Activated CD4-positive, alpha-beta memory T cell treated with anti-CD3 and anti-CD28 coated beads for 36 hours (primary cell): ENCODE measurements at regions of chr12 and their contacts with region 1.

Region 1: DNA sequence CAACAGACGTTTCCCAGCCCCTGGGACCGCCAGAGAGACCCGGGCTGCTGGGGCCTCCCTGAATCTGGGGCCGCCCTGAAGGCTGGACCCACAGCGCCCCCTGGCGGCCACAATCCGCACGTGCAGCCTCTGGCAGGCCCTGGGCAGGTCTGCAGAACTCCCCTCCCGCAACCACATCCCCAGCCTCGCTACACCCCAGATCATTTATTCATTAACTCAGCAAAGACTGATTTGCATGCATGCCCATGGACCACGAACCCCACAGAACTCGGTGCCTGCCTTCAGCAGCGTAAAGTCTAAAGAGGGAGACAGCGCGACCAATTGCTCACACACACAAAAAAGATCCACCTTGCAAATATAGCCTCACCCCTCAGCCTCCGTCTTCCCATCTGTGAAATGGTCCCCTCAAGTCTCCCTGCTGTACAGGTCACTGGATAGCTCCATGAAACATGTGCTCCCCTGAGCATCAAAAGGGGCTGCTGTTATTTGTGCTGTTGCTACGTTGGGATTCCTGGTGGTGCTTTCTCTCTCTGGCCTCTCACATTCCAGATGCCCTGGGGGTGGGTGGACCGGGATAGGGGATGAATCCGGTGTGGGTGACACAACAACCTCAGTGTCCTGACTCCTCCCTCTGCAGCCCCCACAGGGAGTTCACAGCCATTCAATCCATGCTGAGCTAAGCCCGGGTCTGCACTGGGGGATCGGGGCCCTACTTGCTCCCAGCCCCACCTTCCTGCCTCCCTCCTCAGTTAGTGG is 96.4 kb downstream of the SCARB1 start:
- DNase-seq: peak; percentile 88
- H3K4me3 Mint-ChIP-seq: no peak overlapping the region
- H3K27ac Mint-ChIP-seq: no peak overlapping the region
- H3K4me1 Mint-ChIP-seq: peaks cover 18% of the 10 kb centered on the region
- H3K27me3 Mint-ChIP-seq: peaks cover 15% of the 10 kb centered on the region

Region 2: GRCh38 chr12:124036674-124037109 is 730.6 kb before region 1 on chr12:
- CTCF ChIA-PET with region 1: interaction called, 44 read pairs
- POLR2A ChIA-PET with region 1: no interaction called
- intact Hi-C with region 1: loop called (anchors 1 kb)
- DNase-seq: peak; percentile 41
- H3K4me3 Mint-ChIP-seq: no peak overlapping the region
- H3K27ac Mint-ChIP-seq: no peak overlapping the region
- H3K4me1 Mint-ChIP-seq: no peaks in the 10 kb centered on the region
- H3K27me3 Mint-ChIP-seq: peaks cover 4% of the 10 kb centered on the region

Region 3: GRCh38 chr12:124321040-124321481 is 446.2 kb before region 1 on chr12:
- CTCF ChIA-PET with region 1: interaction called, 3 read pairs
- POLR2A ChIA-PET with region 1: no interaction called
- intact Hi-C with region 1: loop called (anchors 10 kb)
- DNase-seq: peak; percentile 79
- H3K4me3 Mint-ChIP-seq: no peak overlapping the region
- H3K27ac Mint-ChIP-seq: no peak overlapping the region
- H3K4me1 Mint-ChIP-seq: no peaks in the 10 kb centered on the region
- H3K27me3 Mint-ChIP-seq: no peaks in the 10 kb centered on the region

Region 4: GRCh38 chr12:124399622-124400021 is 367.6 kb before region 1 on chr12:
- CTCF ChIA-PET with region 1: interaction called, 3 read pairs
- POLR2A ChIA-PET with region 1: no interaction called
- intact Hi-C with region 1: loop called (anchors 1 kb)
- DNase-seq: peak; percentile 37
- H3K4me3 Mint-ChIP-seq: no peak overlapping the region
- H3K27ac Mint-ChIP-seq: no peak overlapping the region
- H3K4me1 Mint-ChIP-seq: peaks cover 2% of the 10 kb centered on the region
- H3K27me3 Mint-ChIP-seq: no peaks in the 10 kb centered on the region

Region 5: DNA sequence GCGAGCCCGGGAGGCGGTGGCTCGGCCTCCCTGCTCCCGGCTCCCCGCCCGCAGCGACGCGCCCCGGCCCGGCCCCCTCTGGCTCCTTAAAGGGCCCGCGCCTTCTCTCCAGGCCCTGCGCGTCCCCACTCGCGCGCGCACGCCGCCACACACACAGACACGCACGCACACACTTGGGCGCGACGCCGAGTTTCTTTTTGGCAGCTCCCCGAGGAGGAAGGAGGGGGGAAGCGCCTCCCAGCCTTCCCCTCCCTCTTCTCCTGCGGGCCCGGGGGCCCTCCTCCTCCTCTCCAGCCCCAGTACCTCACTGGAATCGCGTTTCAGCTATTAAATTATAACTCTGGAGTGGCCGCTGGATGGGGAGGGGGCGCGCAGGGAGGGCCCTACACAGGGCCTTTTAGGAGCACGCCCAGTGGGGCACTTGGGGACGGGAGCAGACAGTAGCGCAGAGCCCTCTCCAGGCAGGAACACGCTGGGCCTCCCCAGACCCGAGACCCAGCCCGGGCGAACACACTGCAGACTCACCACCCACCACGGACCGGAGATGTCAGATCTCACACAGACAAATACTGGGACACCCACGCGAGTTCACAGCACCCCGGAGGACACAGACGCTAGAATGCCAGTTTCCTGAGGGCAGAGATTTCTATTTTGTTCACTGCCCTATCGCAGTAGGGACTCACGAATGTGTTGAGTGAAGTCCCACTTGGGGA is 199.4 kb before region 1 on chr12:
- CTCF ChIA-PET with region 1: interaction called, 5 read pairs
- POLR2A ChIA-PET with region 1: no interaction called
- intact Hi-C with region 1: loop called (anchors 1 kb)
- DNase-seq: peak; percentile 83
- H3K4me3 Mint-ChIP-seq: peak overlapping the region; percentile 74
- H3K27ac Mint-ChIP-seq: peak overlapping the region; percentile 42
- H3K4me1 Mint-ChIP-seq: peaks cover 26% of the 10 kb centered on the region
- H3K27me3 Mint-ChIP-seq: no peaks in the 10 kb centered on the region

Region 6: DNA sequence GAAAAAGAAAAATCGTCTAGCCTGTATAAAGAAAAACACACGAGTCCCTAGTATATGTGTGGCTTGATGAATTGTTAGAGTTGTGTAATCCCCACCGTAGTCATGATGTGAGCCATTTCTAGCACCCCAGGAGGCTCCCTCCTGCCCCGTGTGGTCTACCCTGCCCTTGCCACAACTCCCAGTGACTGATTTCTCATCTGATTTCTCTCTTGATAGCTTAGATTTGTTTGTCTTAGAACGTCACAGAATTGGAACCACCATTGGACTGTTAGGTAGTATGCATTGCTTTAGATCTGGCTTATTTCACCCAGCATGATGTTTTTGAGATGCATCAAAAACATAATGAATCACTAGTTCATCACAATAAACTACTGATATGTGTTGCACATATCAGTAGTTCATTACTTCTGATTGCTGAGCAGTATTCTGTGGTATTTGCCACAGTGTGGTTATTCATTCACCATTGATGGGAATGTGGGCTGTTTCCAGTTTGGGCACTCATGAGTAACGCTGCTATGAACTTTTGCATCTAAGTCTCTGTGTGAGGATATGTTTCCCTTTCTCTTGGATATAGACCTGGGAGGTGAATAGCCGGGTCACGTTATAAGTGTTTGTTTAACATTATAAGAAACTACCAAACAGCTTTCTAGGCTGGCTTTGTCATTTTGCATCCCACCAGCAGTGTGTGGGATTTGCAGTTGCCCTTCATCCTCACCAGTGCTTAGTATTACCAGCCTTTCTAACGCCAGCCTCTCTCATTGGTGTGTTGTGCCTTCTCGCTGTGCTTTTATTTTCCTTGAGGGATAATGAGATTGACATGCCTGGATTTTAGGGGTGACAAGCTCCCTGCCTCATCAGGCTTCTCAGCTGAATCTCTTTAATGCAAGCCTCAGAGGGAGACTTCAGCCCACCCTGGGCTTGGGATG is 167.9 kb before region 1 on chr12:
- CTCF ChIA-PET with region 1: no interaction called
- POLR2A ChIA-PET with region 1: no interaction called
- intact Hi-C with region 1: no loop called
- DNase-seq: peak; percentile 71
- H3K4me3 Mint-ChIP-seq: no peak overlapping the region
- H3K27ac Mint-ChIP-seq: no peak overlapping the region
- H3K4me1 Mint-ChIP-seq: peaks cover 10% of the 10 kb centered on the region
- H3K27me3 Mint-ChIP-seq: peaks cover 13% of the 10 kb centered on the region

Region 7: DNA sequence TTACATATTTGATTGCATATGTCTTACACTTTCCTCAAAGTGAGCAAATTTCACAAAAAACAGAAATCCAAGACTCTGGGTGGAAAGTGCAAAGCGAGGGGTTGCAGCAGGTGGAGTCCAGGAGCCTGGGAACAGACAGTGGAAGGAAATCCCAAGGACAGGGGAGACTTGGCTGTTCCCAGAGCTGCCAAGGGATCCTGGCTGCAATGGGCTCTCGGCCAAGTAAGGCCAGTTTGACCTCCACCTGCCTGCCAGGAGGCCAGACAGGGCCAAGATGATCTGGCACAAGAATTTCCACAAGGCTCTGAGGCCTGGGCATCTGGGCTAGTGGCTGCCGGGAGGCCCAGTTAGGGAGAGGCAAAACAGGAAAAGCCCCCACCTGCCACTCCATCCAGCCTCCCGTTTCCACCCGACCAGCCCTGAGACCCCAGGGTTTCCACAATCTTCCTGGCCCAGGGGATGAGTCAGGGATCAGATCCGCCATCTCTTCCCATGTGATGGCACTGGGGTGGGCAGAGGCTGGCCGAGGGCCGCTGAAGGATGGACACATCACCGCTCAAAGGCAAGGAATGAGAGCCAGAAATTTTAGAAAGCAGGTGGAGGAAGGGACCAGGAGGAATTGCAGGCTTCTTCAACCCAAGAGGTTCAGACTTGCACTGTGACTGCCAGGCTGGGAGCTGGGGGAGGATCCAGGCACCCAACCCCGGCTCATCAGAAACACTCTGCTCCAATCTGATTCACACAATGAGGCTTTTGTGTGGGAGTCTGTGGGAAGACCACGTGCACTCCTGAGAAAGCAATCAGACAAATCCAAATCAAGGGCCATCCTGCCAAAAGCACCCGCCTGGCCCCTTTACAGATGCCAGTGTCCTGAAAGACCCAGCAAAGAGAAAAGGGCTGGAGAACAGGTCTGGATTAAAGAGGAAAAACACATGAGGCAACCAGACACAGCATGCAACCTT is 80.2 kb after region 1 on chr12:
- CTCF ChIA-PET with region 1: no interaction called
- POLR2A ChIA-PET with region 1: no interaction called
- intact Hi-C with region 1: no loop called
- DNase-seq: no peak
- H3K4me3 Mint-ChIP-seq: no peak overlapping the region
- H3K27ac Mint-ChIP-seq: no peak overlapping the region
- H3K4me1 Mint-ChIP-seq: no peaks in the 10 kb centered on the region
- H3K27me3 Mint-ChIP-seq: no peaks in the 10 kb centered on the region

Region 8: GRCh38 chr12:126772171-126772864 is 2005.1 kb after region 1 on chr12:
- CTCF ChIA-PET with region 1: no interaction called
- POLR2A ChIA-PET with region 1: no interaction called
- intact Hi-C with region 1: loop called (anchors 10 kb)
- DNase-seq: peak; percentile 67
- H3K4me3 Mint-ChIP-seq: peak overlapping the region; percentile 84
- H3K27ac Mint-ChIP-seq: peak overlapping the region; percentile 93
- H3K4me1 Mint-ChIP-seq: peaks cover 28% of the 10 kb centered on the region
- H3K27me3 Mint-ChIP-seq: no peaks in the 10 kb centered on the region